Activated CD8-positive, alpha-beta T cell treated with anti-CD3 and anti-CD28 coated beads for 36 hours (primary cell): ENCODE measurements at regions of chr11 and their contacts with region 1.

Region 1: GRCh38 chr11:9384535-9385303 is at the start of gene IPO7:
- DNase-seq: peak; percentile 95
- ATAC-seq: peak; percentile 98
- H3K4me3 Mint-ChIP-seq: peak within 1 kb of the TSS; percentile 94
- H3K27ac Mint-ChIP-seq: peak within 1 kb of the TSS; percentile 84
- H3K4me1 Mint-ChIP-seq: peaks cover 21% of the 10 kb centered on the region
- H3K27me3 Mint-ChIP-seq: no peaks in the 10 kb centered on the region
- CTCF ChIP-seq: no peak
- total RNA-seq, gene IPO7: 181 to 186 TPM

Region 2: GRCh38 chr11:9280655-9281301 is 103.9 kb before region 1 on chr11:
- CTCF ChIA-PET with region 1: no interaction called
- POLR2A ChIA-PET with region 1: interaction called, 11 read pairs
- intact Hi-C with region 1: no loop called
- DNase-seq: peak; percentile 76
- ATAC-seq: peak; percentile 90
- H3K4me3 Mint-ChIP-seq: no peak overlapping the region
- H3K27ac Mint-ChIP-seq: no peak overlapping the region
- H3K4me1 Mint-ChIP-seq: peaks cover 11% of the 10 kb centered on the region
- H3K27me3 Mint-ChIP-seq: no peaks in the 10 kb centered on the region
- CTCF ChIP-seq: no peak

Region 3: DNA sequence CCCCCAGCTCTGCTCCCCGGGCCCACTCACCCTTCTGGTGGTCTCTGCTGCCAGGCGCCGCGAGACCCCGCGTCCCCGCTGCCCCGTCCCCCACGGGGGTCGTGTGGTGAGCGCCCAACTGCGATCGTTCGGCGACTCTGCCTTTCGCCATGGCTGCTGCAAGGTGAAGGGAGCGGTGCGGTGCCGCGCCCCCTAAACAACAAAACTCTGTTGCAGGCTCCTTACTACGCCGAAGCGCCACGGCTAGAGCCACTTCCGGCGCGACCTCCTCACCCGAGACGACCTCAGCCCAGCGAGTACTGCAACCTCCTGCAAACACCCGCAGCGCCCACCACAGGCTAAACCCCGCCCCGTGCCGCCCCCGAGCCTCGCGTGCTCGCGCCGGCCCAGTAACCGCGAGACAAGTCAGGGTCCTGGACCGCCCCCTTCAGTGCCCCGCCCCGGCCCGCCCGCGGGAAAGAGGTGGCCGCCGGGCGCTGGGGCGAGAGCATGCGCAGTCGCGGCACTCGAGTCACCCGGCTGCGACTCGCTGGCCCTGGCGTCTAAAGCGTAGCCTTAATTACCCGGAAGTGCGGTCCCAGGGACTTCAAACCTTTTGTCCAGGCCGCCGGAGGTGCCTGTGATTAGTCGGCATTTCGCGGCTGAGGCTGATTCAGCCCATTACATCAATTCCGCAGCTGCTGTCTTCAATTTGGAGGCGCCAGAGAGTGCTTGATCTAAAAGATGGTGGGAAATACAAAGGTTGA is 70.3 kb before region 1 on chr11 and contains the start of gene TMEM41B:
- CTCF ChIA-PET with region 1: interaction called, 5 read pairs
- POLR2A ChIA-PET with region 1: interaction called, 19 read pairs
- intact Hi-C with region 1: no loop called
- DNase-seq: peak; percentile 99
- ATAC-seq: peak; percentile 94
- H3K4me3 Mint-ChIP-seq: peak within 1 kb of the TSS; percentile 97
- H3K27ac Mint-ChIP-seq: peak within 1 kb of the TSS; percentile 98
- H3K4me1 Mint-ChIP-seq: peaks cover 26% of the 10 kb centered on the region
- H3K27me3 Mint-ChIP-seq: peaks cover 8% of the 10 kb centered on the region
- CTCF ChIP-seq: no peak
- total RNA-seq, gene TMEM41B: 20.4 to 23.0 TPM

Region 4: GRCh38 chr11:9347100-9347499 is 37.6 kb before region 1 on chr11:
- CTCF ChIA-PET with region 1: no interaction called
- POLR2A ChIA-PET with region 1: interaction called, 13 read pairs
- intact Hi-C with region 1: no loop called
- DNase-seq: no peak
- ATAC-seq: peak; percentile 55
- H3K4me3 Mint-ChIP-seq: no peak overlapping the region
- H3K27ac Mint-ChIP-seq: no peak overlapping the region
- H3K4me1 Mint-ChIP-seq: peaks cover 9% of the 10 kb centered on the region
- H3K27me3 Mint-ChIP-seq: no peaks in the 10 kb centered on the region
- CTCF ChIP-seq: no peak

Region 5: DNA sequence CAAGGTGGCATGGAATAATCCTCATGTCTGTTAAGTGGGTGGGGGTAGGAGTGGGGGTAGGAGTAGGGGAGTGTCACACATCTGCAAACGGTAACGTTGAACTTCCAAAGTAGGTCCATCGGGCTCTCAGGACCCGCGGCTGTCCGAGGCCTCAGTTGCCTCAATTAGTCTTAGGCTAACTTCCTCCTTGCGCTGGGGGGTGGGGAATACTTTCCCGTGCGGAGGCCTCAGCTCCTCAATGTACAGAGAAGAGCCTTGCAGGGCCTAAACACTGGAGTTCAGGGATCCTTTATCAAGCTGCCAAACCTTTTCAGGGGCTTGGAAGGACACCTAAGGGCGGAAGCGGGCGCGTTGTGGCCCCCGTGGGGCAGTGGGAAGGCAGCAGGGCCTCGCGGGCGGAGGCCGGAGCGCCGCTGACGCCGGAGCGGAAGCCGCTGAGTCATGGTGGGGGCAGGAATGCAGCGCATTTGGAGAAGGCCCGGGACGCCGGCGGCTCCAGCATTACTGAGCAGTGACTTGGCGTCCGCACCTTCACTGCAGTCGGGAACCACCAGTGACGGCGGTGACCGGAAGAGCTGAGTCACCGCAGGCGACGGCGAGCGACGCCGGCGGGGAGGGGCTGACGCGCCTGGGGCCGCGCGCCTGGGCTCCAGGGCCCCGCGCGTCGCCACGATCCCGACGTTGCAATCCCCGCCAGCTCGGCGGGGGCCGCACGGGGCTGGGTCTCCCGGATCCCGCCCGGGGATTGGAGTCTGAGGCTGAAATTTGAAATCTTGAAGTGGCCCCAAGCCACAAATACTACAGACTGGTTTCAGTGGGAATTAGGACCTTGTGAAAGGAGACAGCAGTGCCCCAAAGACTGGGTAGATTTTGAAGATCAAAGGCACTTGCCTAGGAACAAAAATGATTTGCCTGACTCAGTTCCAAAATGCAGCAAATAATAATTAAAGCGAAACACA is 20.5 kb before region 1 on chr11:
- CTCF ChIA-PET with region 1: interaction called, 3 read pairs
- POLR2A ChIA-PET with region 1: interaction called, 21 read pairs
- intact Hi-C with region 1: no loop called
- DNase-seq: peak; percentile 88
- ATAC-seq: peak; percentile 94
- H3K4me3 Mint-ChIP-seq: peak overlapping the region; percentile 73
- H3K27ac Mint-ChIP-seq: peak overlapping the region; percentile 88
- H3K4me1 Mint-ChIP-seq: peaks cover 28% of the 10 kb centered on the region
- H3K27me3 Mint-ChIP-seq: no peaks in the 10 kb centered on the region
- CTCF ChIP-seq: no peak

Region 6: DNA sequence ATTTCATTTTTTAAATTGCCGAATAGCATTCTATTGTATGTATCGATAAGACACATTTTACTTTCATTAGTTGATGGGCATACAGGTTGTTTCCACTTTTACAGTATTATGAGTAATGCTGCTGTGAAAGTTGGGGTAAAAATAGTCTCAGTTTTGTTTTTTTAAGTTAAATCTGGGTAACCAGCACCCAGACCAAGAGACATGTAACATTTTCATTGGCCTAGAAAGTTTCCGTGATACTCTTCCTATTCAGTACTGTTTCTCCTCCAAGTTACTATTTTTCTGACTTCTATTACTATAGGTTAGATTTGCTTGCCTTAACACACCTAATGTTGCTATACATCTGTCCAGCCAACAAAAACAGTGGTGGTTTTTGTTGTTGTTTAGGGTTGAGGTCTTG is 12.0 kb after region 1 on chr11:
- CTCF ChIA-PET with region 1: interaction called, 8 read pairs
- POLR2A ChIA-PET with region 1: interaction called, 21 read pairs
- intact Hi-C with region 1: no loop called
- DNase-seq: no peak
- ATAC-seq: peak; percentile 67
- H3K4me3 Mint-ChIP-seq: no peak overlapping the region
- H3K27ac Mint-ChIP-seq: peak overlapping the region; percentile 64
- H3K4me1 Mint-ChIP-seq: peaks cover 58% of the 10 kb centered on the region
- H3K27me3 Mint-ChIP-seq: no peaks in the 10 kb centered on the region
- CTCF ChIP-seq: no peak

Region 7: DNA sequence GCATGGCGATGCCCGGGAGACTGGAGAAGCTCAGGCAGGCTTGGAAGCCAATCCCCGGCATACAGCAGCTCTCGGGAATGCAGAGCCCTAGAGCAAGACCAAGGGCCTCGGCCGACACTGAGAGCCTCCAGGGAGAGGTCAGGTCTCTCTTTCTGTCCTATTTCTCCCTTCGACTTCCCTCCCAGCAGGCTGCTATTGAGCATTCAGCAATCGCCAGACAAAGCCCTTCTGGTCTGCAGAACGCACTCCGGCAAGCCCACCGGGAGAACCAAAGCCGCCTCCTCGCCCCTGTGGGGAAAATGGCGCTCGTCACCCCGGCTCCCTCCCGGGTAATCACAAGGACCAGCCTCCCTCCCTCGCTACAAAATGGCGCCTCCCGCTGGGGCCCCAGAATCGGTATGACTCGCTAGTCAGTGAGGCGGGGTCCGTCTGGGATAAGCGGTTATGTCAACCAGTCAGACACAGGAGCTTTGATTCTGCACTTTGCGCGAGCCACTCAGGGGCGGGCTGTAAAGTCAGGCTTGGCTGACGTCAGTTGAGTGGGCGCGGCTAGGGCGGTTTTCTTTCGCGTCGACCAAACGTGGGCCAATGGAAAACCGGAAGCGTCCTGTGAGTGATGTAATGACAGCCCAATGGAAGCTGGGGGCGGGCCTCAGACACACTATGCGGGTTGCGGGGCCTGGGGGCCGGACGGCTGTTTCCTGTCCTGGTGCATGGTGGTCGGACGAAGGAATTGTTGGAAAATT is 75.8 kb after region 1 on chr11 and contains the start of gene ZNF143:
- CTCF ChIA-PET with region 1: interaction called, 5 read pairs
- POLR2A ChIA-PET with region 1: interaction called, 22 read pairs
- intact Hi-C with region 1: loop called (anchors 1 kb)
- DNase-seq: peak; percentile 100
- ATAC-seq: peak; percentile 91
- H3K4me3 Mint-ChIP-seq: peak within 1 kb of the TSS; percentile 94
- H3K27ac Mint-ChIP-seq: peak within 1 kb of the TSS; percentile 98
- H3K4me1 Mint-ChIP-seq: peaks cover 22% of the 10 kb centered on the region
- H3K27me3 Mint-ChIP-seq: no peaks in the 10 kb centered on the region
- CTCF ChIP-seq: no peak
- total RNA-seq, gene ZNF143: 26.5 to 33.7 TPM